ENCODE measurements at regions of chr1 and their contacts with region 1.

Region 1: DNA sequence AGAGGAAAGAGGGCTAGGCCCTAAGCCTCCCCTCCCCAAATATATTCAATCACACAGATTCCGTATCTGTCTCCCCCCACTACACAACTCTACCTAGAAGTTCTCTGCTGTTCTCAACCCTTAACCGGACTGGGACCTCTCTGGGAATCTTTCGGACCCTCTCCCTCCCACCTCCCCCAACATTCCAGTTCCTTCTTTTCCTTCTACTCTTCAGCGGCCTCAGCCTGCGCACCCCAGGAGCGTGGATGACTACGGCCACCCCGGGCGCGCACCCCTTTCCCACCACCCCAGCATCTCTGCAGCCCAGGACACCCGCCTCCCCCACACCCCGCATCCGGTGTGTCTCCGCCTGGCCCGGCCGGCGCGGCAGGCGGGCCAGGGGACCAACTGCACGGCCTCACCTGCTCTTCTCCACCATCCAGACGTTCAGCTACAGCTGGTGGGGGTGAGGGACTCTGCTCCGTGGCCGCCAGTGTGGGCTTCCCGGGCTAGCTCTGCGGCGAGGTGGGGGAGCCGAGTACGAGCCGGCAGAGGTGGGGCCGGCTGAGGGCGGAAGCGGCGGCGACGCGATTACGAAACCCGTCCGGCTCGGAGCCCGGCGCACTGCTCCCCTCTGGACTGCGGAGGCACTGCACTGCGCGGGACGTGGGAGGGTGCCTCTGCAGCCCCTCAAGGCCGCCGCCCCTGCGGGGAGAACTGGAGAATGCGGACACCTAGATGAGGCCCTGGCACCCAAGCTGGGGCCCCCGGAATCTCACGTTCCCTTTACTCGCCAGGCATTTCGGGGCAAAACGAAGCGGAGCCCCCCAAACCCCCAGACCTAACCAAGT is at the start of gene CDC42SE1:
- DNase-seq: peak; percentile 55 to 90 (median 82)
- H3K4me3 ChIP-seq: peak within 1 kb of the TSS; percentile 62 to 99 (median 87)
- H3K27ac ChIP-seq: peak within 1 kb of the TSS; percentile 82 to 99 (median 96)
- H3K27me3 ChIP-seq: no peaks in the 10 kb centered on the region
- CTCF ChIP-seq: peak; percentile 57 to 92 (median 76)
- total RNA-seq, gene CDC42SE1: 46.3 to 92.3 (median 62.6) TPM

Region 2: DNA sequence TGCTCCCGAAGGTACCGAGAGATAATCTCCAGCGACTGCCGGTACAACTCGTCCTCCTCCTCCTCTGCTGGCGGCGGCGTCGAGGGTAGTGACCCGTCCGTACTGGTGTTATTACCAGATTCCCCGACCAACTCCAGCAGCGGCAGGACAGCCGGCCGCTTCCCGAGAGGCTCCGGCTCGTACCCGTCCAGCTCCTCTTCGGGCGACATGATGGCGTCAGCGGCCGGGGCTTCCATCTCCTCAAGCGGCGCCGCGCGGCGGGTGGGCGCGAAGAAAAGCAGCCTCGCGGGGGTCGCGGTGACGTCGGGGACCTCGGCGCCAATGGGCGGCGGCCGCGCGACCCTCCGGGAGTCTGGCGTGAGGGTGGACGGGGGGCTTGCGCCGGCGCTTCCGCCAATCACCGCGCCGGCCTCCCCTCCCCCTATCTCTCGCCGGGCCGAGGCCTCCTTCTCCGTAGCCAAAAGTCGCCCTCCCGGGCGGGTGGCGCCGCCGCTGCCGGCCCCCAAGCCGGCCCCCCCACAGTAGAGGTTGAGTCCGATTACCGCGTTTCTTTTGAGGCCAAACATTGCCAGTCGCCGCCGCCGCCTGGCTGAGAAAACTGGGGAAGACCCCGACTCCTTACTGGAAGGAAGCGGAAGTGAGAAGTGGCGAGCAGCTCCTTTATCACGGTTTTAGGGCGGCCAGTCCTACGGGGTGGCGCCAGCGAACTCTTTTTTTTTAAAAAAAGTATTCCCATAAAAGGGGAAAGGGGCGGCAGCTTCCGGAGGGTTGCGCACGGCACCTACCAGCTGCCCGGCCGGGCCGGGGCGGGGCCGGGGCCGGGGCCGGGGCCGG is 480.1 kb before region 1 on chr1 and contains the start of gene MCL1:
- intact Hi-C with region 1: no loop called
- DNase-seq: peak; percentile 72 to 94 (median 92)
- H3K4me3 ChIP-seq: peak within 1 kb of the TSS; percentile 59 to 99 (median 94)
- H3K27ac ChIP-seq: peak within 1 kb of the TSS; percentile 89 to 100 (median 98)
- H3K27me3 ChIP-seq: no peaks in the 10 kb centered on the region
- CTCF ChIP-seq: peak in 38 of 56 donors; percentile 13 to 61 (median 38)
- total RNA-seq, gene MCL1: 43.4 to 130 (median 70.6) TPM

Region 3: GRCh38 chr1:150813058-150813707 is 246.1 kb before region 1 on chr1:
- intact Hi-C with region 1: no loop called
- DNase-seq: peak in 5 of 10 donors; percentile 12 to 55 (median 37)
- H3K4me3 ChIP-seq: no peak overlapping the region
- H3K27ac ChIP-seq: peak overlapping the region in 7 of 59 donors; percentile 3 to 53 (median 17)
- H3K27me3 ChIP-seq: no peaks in the 10 kb centered on the region
- CTCF ChIP-seq: peak in 51 of 56 donors; percentile 26 to 62 (median 46)

Region 4: DNA sequence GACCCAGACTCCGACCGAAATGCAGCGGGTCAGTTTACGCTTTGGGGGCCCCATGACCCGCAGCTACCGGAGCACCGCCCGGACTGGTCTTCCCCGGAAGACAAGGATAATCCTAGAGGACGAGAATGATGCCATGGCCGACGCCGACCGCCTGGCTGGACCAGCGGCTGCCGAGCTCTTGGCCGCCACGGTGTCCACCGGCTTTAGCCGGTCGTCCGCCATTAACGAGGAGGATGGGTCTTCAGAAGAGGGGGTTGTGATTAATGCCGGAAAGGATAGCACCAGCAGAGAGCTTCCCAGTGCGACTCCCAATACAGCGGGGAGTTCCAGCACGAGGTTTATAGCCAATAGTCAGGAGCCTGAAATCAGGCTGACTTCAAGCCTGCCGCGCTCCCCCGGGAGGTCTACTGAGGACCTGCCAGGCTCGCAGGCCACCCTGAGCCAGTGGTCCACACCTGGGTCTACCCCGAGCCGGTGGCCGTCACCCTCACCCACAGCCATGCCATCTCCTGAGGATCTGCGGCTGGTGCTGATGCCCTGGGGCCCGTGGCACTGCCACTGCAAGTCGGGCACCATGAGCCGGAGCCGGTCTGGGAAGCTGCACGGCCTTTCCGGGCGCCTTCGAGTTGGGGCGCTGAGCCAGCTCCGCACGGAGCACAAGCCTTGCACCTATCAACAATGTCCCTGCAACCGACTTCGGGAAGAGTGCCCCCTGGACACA is 11.2 kb before region 1 on chr1:
- intact Hi-C with region 1: loop called in 1 of 2 experiments (anchors 1 kb)
- DNase-seq: peak; percentile 53 to 84 (median 72)
- H3K4me3 ChIP-seq: peak overlapping the region; percentile 66 to 99 (median 88)
- H3K27ac ChIP-seq: peak overlapping the region; percentile 83 to 99 (median 94)
- H3K27me3 ChIP-seq: no peaks in the 10 kb centered on the region
- CTCF ChIP-seq: peak in 37 of 56 donors; percentile 19 to 62 (median 52)